ENCODE measurements at regions of chr14 and their contacts with region 1.

Region 1: DNA sequence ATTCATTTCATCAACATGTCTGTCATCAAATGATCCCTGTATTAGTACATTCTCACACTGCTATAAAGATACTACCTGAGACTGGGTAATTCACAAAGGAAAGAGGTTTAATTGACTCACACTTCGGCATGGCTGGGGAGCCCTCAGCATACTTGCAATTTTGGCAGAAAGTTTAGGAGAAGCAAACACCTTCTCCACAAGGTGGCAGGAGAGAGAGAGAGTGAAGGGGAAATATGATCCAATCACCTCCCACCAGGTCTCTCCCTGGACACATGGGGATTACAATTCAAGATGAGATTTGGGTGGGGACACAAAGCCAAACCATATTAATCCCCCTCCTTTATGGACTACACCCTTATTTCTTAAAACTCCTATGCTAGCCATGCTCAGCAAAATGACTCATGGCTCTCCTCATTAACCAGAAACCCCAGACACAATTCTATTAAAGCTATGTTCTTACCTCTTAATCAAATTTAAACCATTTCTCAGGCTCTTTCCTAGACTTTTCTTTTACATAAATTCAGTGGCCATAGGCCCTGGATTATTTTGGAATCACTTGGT is 932.3 kb downstream of the FLRT2 start:
- DNase-seq: no peak
- ATAC-seq: peak; percentile 37; the same call in 1 of the 3 replicates
- H3K4me3 ChIP-seq: no peak overlapping the region
- H3K27ac ChIP-seq: no peak overlapping the region
- H3K4me1 ChIP-seq: no peaks in the 10 kb centered on the region
- H3K27me3 ChIP-seq: no peaks in the 10 kb centered on the region
- CTCF ChIP-seq: peak in 1 of 3 experiments; percentile 23; a peak in 2 of 6 replicates
- EP300 ChIP-seq: no peak
- POLR2A ChIP-seq: no peak
- RAD21 ChIP-seq: no peak

Region 2: DNA sequence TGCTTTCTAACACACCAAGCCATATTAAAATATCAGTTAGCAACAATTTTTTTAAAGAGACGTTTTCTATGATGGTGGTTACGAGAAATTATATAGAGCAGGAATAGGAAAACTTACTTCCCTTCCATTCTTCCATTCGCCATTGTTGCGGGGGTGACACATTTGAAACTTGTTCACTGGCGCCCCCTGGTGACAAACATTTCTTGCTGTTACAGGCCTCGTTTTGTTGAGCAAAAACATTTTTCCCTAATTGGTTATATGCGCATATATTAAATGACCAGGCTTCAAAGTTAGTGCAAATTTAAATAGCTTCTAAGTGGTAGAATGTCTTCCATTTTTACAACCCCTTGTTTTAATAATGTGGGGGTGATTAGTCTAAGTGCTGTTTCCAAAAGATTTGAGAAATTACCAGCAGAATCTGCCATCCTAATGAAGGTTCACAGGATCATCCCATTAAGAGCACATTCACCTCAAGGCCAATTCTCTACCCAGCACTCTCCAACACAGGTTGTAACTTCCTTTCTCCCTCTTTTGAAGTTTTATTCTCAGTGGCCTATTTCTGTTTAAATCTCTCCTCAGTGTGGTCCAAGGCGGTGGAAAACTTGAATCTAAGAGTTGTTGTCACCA is 192.4 kb after region 1 on chr14:
- CTCF ChIA-PET with region 1: interaction called, 23 read pairs
- POLR2A ChIA-PET with region 1: no interaction called
- RAD21 ChIA-PET with region 1: no interaction called
- SMC1A ChIA-PET with region 1: interaction called, 4 read pairs
- in situ Hi-C with region 1: no loop called
- intact Hi-C with region 1: loop called (anchors 5 kb)
- DNase-seq: no peak
- ATAC-seq: no peak
- H3K4me3 ChIP-seq: no peak overlapping the region
- H3K27ac ChIP-seq: no peak overlapping the region
- H3K4me1 ChIP-seq: no peaks in the 10 kb centered on the region
- H3K27me3 ChIP-seq: no peaks in the 10 kb centered on the region
- CTCF ChIP-seq: peak in 1 of 3 experiments; percentile 35; a peak in 1 of 6 replicates
- EP300 ChIP-seq: no peak
- POLR2A ChIP-seq: no peak
- RAD21 ChIP-seq: peak; percentile 40

Region 3: DNA sequence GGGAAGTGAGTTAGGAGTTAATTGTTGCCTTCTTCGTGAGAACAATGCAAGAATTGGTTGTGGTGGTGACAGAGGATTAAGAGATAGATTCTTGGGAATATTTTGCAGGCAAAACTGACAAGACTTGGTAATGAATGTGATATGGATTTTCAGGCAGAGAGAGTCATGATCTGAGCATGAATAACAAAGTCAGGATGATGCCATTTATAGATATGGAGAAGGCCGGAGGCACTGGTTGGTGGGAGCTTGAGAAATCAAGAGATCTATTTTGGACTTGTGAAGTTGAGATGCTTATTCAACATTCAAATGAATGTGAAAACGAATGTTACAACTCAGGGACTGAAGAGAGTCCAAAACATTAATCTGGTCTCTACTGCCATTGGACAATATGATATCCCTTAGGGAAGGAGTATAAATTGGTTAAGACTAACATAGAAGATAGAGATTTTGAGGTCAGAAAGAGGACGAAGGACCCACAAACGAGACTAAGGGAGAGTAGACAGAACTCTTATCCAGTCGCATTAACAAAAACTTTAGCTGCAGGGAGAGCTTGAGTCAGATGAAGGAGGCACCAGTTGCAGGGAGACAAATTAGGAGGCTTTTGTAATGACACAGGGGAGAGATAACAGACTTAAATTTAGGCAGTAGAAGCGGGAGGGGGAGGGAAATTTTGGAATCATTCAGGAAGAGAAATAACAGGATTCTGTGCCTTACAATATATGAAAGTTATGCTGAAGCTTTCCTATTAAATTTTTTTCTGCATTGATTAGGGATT is 440.1 kb after region 1 on chr14:
- CTCF ChIA-PET with region 1: interaction called, 5 read pairs
- POLR2A ChIA-PET with region 1: no interaction called
- RAD21 ChIA-PET with region 1: no interaction called
- SMC1A ChIA-PET with region 1: interaction called, 6 read pairs
- in situ Hi-C with region 1: no loop called
- intact Hi-C with region 1: loop called (anchors 5 kb)
- DNase-seq: no peak
- ATAC-seq: no peak
- H3K4me3 ChIP-seq: no peak overlapping the region
- H3K27ac ChIP-seq: no peak overlapping the region
- H3K4me1 ChIP-seq: no peaks in the 10 kb centered on the region
- H3K27me3 ChIP-seq: no peaks in the 10 kb centered on the region
- CTCF ChIP-seq: no peak
- EP300 ChIP-seq: no peak
- POLR2A ChIP-seq: no peak
- RAD21 ChIP-seq: no peak